AG04450 (cell line): ENCODE measurements at regions of chr1 and their contacts with region 1.

Region 1: DNA sequence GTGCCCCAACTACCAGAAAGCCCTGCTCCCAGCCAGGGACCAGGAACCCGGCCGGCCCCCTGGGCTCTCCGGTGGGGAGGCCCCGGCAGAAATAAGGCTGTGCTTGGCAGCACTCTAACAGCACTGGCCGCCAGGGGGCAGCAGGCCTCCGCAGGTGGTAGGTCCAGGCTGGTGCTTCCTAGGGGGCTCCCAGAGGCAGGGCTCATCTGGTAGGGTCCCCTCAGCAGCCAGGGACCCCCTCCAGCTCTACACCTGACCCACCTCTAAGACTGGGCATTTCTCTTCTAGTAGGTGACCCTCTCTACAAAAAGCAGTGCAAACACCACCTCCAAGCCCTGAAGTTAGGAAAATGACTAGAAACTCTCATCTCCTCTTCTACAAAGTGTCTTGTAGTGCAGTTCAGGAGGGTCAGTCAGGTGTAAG is 85.6 kb downstream of the STUM start:
- DNase-seq: no peak
- H3K4me3 ChIP-seq: no peak overlapping the region
- H3K27ac ChIP-seq: no peak overlapping the region
- H3K27me3 ChIP-seq: no peaks in the 10 kb centered on the region
- CTCF ChIP-seq: peak; percentile 96

Region 2: DNA sequence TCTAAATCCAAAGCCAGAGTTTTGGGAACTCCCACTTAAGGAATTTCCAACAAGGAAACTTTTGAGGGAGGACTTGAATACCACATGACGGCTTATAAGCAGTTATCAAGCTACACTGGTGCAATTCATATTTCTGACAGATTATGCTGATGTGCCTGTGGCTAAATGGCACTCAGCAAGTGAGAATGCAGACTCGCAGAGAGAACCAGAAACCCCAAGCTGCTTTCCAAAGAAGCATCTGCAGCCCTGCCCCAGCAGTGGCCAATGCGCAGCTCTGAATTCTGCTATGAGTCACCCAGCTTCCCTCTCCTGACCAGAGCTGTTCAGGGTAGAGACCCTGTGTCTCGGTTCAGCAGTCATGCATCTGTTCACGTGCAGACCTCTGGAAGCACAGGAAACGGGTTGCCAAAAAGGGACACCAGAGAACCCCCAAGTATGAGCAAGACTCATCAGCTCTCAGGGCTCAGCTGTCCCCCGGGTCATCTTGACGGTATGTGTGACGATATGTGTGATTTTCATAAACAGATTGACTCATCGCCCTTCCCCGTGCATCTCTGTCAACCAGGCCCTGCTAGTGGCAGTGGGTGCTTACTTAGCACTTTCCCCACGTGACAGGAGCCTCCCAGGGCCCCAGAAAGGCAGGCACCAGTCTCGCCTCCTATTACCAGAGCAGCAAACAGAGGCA is 28.6 kb after region 1 on chr1:
- CTCF ChIA-PET with region 1: interaction called, 14 read pairs
- POLR2A ChIA-PET with region 1: no interaction called
- DNase-seq: peak; percentile 85
- H3K4me3 ChIP-seq: no peak overlapping the region; the same call in 1 of the 2 replicates
- H3K27ac ChIP-seq: peak overlapping the region; percentile 96
- H3K27me3 ChIP-seq: no peaks in the 10 kb centered on the region
- CTCF ChIP-seq: no peak

Region 3: GRCh38 chr1:226786550-226786949 is 152.4 kb after region 1 on chr1:
- CTCF ChIA-PET with region 1: no interaction called
- POLR2A ChIA-PET with region 1: no interaction called
- DNase-seq: no peak
- H3K4me3 ChIP-seq: no peak overlapping the region
- H3K27ac ChIP-seq: no peak overlapping the region
- H3K27me3 ChIP-seq: peaks cover 17% of the 10 kb centered on the region
- CTCF ChIP-seq: no peak

Region 4: GRCh38 chr1:226827968-226828513 is 193.9 kb after region 1 on chr1:
- CTCF ChIA-PET with region 1: interaction called, 138 read pairs
- POLR2A ChIA-PET with region 1: no interaction called
- DNase-seq: peak; percentile 85
- H3K4me3 ChIP-seq: no peak overlapping the region
- H3K27ac ChIP-seq: no peak overlapping the region
- H3K27me3 ChIP-seq: peaks cover 3% of the 10 kb centered on the region
- CTCF ChIP-seq: peak; percentile 94

Region 5: GRCh38 chr1:226846801-226847200 is 212.6 kb after region 1 on chr1:
- CTCF ChIA-PET with region 1: no interaction called
- POLR2A ChIA-PET with region 1: interaction called, 15 read pairs
- DNase-seq: no peak
- H3K4me3 ChIP-seq: no peak overlapping the region
- H3K27ac ChIP-seq: no peak overlapping the region
- H3K27me3 ChIP-seq: peaks cover 2% of the 10 kb centered on the region
- CTCF ChIP-seq: no peak